GM18951 (cell line): ENCODE measurements at regions of chr1 and their contacts with region 1.

Region 1: GRCh38 chr1:198681831-198682759 is 43.3 kb downstream of the PTPRC start:
- POLR2A ChIP-seq: no peak

Region 2: GRCh38 chr1:197937892-197938291 is 744.2 kb before region 1 on chr1:
- in situ Hi-C with region 1: no loop called
- POLR2A ChIP-seq: no peak

Region 3: DNA sequence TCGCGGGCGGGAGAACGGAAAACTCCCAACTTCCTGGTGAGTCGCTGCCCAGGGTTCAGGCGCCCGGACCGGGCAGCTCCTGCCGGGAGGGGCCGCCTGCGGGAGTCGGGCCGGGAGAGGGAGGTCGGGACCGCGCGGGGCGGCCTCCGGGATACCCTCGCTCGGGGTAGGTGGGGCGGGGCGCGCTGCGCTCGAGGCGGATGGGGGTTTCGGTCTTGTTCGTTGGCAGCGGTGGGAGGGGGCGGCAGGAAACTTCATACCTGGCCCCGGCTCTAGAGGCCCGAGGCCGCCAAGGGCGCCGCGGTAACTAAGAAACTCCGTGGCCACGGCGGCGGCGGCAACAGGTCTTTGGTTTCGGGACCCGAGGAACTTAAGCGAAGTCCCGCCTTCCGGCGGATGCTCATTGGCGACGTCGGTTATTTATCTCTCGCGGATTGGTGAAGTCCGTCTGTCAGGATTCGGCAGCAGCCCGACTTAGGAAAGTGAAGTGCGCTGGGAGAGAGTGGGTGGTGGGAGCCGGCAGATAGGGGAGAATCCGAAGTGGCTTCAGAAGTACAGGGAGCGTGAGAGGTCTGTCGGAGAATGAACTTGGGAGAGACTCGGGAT is 524.8 kb before region 1 on chr1:
- in situ Hi-C with region 1: loop called (anchors 25 kb)
- POLR2A ChIP-seq: no peak

Region 4: GRCh38 chr1:198318085-198318484 is 364.0 kb before region 1 on chr1:
- in situ Hi-C with region 1: no loop called
- POLR2A ChIP-seq: no peak

Region 5: GRCh38 chr1:198520524-198521254 is 161.4 kb before region 1 on chr1:
- in situ Hi-C with region 1: loop called (anchors 25 kb)
- POLR2A ChIP-seq: no peak

Region 6: GRCh38 chr1:198620951-198621824 is 60.9 kb before region 1 on chr1:
- in situ Hi-C with region 1: loop called (anchors 10 kb)
- POLR2A ChIP-seq: peak; percentile 44